ENCODE measurements at regions of chr16 and their contacts with region 1.

Region 1: GRCh38 chr16:50806099-50807062 is 64.5 kb downstream of the CYLD start:
- DNase-seq: peak; percentile 85 to 88
- H3K4me3 ChIP-seq: peak overlapping the region; percentile 13
- H3K4me3 Mint-ChIP-seq: peak overlapping the region; percentile 67
- H3K27ac Mint-ChIP-seq: no peak overlapping the region
- H3K4me1 ChIP-seq: peaks cover 5% of the 10 kb centered on the region; the same call in 1 of the 2 replicates
- H3K4me1 Mint-ChIP-seq: no peaks in the 10 kb centered on the region
- H3K27me3 ChIP-seq: no peaks in the 10 kb centered on the region
- H3K27me3 Mint-ChIP-seq: peaks cover 3% of the 10 kb centered on the region
- CTCF ChIP-seq: peak; percentile 95 to 96

Region 2: GRCh38 chr16:50024684-50025536 is 781.5 kb before region 1 on chr16 and contains the start of gene CNEP1R1:
- CTCF ChIA-PET with region 1: interaction called, 13 read pairs
- POLR2A ChIA-PET with region 1: no interaction called
- intact Hi-C with region 1: no loop called
- DNase-seq: peak; percentile 97 to 98
- H3K4me3 ChIP-seq: peak within 1 kb of the TSS; percentile 82
- H3K4me3 Mint-ChIP-seq: peak within 1 kb of the TSS; percentile 97
- H3K27ac Mint-ChIP-seq: peak within 1 kb of the TSS; percentile 75
- H3K4me1 ChIP-seq: peaks cover 12% of the 10 kb centered on the region
- H3K4me1 Mint-ChIP-seq: peaks cover 12% of the 10 kb centered on the region
- H3K27me3 ChIP-seq: no peaks in the 10 kb centered on the region
- H3K27me3 Mint-ChIP-seq: peaks cover 2% of the 10 kb centered on the region
- CTCF ChIP-seq: peak; percentile 98 to 100
- total RNA-seq, gene CNEP1R1: 34.5 and 39.4 TPM in 2 replicates

Region 3: GRCh38 chr16:50373780-50374179 is 432.6 kb before region 1 on chr16:
- CTCF ChIA-PET with region 1: interaction called, 36 read pairs
- POLR2A ChIA-PET with region 1: no interaction called
- intact Hi-C with region 1: loop called (anchors 1 kb)
- DNase-seq: no peak
- H3K4me3 ChIP-seq: no peak overlapping the region
- H3K4me3 Mint-ChIP-seq: no peak overlapping the region
- H3K27ac Mint-ChIP-seq: no peak overlapping the region
- H3K4me1 ChIP-seq: peaks cover 10% of the 10 kb centered on the region; the same call in 1 of the 2 replicates
- H3K4me1 Mint-ChIP-seq: peaks cover 18% of the 10 kb centered on the region
- H3K27me3 ChIP-seq: no peaks in the 10 kb centered on the region
- H3K27me3 Mint-ChIP-seq: no peaks in the 10 kb centered on the region
- CTCF ChIP-seq: no peak

Region 4: DNA sequence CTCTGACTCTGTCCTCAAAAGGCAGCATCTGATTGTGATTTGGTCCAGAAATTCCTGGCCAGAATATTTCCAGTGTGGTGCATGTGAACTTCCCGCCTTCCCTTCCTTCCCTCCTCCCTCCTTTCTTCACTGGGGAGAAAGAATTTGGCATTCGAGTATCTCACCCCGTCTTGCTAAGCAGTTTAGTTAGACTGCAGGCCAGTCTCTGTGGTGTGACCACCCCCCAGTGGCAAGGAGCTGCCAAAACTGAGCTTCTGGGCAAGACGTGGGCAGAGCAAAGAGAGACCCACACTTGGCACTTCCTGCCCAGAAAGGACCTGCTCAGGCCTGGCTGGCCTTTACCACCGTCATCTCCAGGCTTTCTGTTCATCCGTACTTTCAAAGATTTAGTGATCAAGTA is 161.7 kb before region 1 on chr16:
- CTCF ChIA-PET with region 1: interaction called, 13 read pairs
- POLR2A ChIA-PET with region 1: no interaction called
- intact Hi-C with region 1: no loop called
- DNase-seq: peak in 1 of 2 experiments; percentile 57
- H3K4me3 ChIP-seq: no peak overlapping the region
- H3K4me3 Mint-ChIP-seq: no peak overlapping the region
- H3K27ac Mint-ChIP-seq: no peak overlapping the region
- H3K4me1 ChIP-seq: no peaks in the 10 kb centered on the region
- H3K4me1 Mint-ChIP-seq: no peaks in the 10 kb centered on the region
- H3K27me3 ChIP-seq: no peaks in the 10 kb centered on the region
- H3K27me3 Mint-ChIP-seq: no peaks in the 10 kb centered on the region
- CTCF ChIP-seq: peak; percentile 34 to 68

Region 5: GRCh38 chr16:50741808-50742575 is 64.4 kb before region 1 on chr16 and contains the start of gene CYLD:
- CTCF ChIA-PET with region 1: interaction called, 47 read pairs
- POLR2A ChIA-PET with region 1: interaction called, 3 read pairs
- intact Hi-C with region 1: loop called (anchors 2 kb)
- DNase-seq: peak; percentile 100
- H3K4me3 ChIP-seq: peak within 1 kb of the TSS; percentile 76
- H3K4me3 Mint-ChIP-seq: peak within 1 kb of the TSS; percentile 78
- H3K27ac Mint-ChIP-seq: no peak within 1 kb of the TSS
- H3K4me1 ChIP-seq: no peaks in the 10 kb centered on the region; the same call in 1 of the 2 replicates
- H3K4me1 Mint-ChIP-seq: no peaks in the 10 kb centered on the region
- H3K27me3 ChIP-seq: peaks cover 1% of the 10 kb centered on the region; the same call in 1 of the 2 replicates
- H3K27me3 Mint-ChIP-seq: peaks cover 8% of the 10 kb centered on the region
- CTCF ChIP-seq: no peak
- total RNA-seq, gene CYLD: 9.8 and 13.1 TPM in 2 replicates

Region 6: DNA sequence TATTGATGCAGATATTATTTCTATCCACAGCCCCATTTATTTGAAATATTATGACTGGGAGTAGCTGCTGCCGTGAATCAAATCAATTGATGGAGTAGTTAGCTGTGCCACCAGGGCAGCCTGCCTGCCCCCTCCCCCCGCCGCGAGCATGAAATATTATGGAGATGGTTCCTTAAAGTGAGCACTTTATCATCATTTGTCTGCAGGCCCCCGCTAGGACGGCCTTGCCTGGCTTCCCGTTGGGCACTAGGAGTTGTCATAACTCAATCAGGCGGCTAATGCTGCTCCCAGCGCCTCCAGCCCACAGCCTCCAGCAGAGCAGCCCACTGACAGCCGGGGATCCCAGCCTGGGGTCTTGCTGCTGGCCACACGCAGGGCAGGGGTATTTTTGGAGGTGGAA is 170.8 kb after region 1 on chr16:
- CTCF ChIA-PET with region 1: no interaction called
- POLR2A ChIA-PET with region 1: no interaction called
- intact Hi-C with region 1: no loop called
- DNase-seq: no peak
- H3K4me3 ChIP-seq: no peak overlapping the region
- H3K4me3 Mint-ChIP-seq: no peak overlapping the region
- H3K27ac Mint-ChIP-seq: no peak overlapping the region
- H3K4me1 ChIP-seq: no peaks in the 10 kb centered on the region; the same call in 1 of the 2 replicates
- H3K4me1 Mint-ChIP-seq: no peaks in the 10 kb centered on the region
- H3K27me3 ChIP-seq: no peaks in the 10 kb centered on the region
- H3K27me3 Mint-ChIP-seq: peaks cover 24% of the 10 kb centered on the region
- CTCF ChIP-seq: no peak

Region 7: DNA sequence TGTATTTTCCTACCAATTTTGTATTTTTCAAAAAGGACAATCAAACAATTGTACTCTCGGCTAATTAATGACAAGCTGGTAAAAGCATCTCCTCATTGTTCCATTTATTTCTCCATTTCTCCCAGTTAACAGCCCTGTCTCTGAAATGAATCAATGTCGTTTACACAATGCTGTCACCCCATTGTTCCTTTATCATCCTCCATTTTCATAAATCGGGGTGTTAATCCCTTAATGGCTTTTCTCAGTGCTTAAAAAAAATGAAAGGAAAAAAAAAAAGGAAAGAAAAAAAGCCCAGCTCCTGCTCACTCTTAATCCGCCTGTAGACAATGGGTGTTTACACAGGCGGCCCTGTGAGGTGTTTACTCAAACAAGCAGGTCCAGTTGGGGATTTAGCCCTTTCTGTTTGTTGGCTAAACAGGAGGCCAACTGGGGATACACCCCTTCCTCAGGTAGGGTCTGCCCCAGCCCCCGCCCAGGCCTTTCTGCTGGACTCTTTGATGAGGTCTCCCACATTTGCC is 431.5 kb after region 1 on chr16:
- CTCF ChIA-PET with region 1: interaction called, 18 read pairs
- POLR2A ChIA-PET with region 1: no interaction called
- intact Hi-C with region 1: no loop called
- DNase-seq: peak; percentile 56 to 57
- H3K4me3 ChIP-seq: no peak overlapping the region
- H3K4me3 Mint-ChIP-seq: no peak overlapping the region
- H3K27ac Mint-ChIP-seq: no peak overlapping the region
- H3K4me1 ChIP-seq: peaks cover 44% of the 10 kb centered on the region
- H3K4me1 Mint-ChIP-seq: peaks cover 29% of the 10 kb centered on the region
- H3K27me3 ChIP-seq: peaks cover 3% of the 10 kb centered on the region
- H3K27me3 Mint-ChIP-seq: peaks cover 23% of the 10 kb centered on the region
- CTCF ChIP-seq: no peak